Activated CD4-positive, alpha-beta T cell treated with anti-CD3 and anti-CD28 coated beads for 36 hours (primary cell): ENCODE measurements at regions of chr15 and their contacts with region 1.

Region 1: DNA sequence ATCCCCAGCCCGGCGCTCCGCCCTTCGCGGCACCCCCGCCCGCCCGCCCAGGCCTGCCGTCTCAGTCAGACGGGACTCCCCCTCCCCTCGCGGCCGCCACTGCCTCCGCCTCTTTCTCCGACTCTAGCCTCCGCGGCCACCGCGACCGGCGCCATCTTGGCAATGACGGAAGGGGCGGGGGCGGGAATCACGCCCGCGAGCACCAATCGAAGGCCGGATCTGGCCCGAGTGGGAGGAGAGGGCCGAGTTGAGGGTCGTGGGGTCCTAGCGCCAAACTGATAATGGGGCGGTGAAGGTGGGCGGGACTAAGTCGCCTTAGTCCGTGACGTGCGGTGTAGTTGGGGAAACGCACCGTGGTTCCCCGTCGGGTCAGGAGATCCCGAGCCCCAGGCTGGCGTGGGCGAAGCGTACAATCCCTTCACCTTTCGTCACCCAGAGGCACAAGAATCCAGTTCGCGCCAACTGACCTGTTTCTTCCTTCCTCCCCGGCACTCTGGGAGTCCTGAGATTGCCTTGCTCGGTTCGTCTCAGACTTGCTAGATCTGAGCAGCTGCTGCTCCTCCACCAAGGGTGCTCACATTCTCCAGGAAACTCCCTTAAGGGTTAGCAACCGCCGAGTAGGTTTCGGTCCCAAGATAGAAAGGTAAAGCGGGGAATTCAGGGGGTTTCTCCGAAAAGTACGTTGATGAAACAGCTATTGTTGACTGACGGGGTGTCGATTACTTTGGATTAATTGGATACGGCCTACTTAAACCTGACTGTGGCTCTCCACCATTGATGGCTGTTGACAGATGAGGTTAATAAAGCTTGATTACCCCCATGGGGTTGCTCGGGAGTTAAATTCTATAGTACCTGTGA is at the start of gene DENND4A:
- DNase-seq: peak; percentile 99
- ATAC-seq: peak; percentile 80
- H3K4me3 Mint-ChIP-seq: peak within 1 kb of the TSS; percentile 80
- H3K27ac Mint-ChIP-seq: peak within 1 kb of the TSS; percentile 98
- H3K4me1 Mint-ChIP-seq: peaks cover 60% of the 10 kb centered on the region
- H3K27me3 Mint-ChIP-seq: no peaks in the 10 kb centered on the region
- total RNA-seq, gene DENND4A: 35.6 to 43.5 TPM

Region 2: DNA sequence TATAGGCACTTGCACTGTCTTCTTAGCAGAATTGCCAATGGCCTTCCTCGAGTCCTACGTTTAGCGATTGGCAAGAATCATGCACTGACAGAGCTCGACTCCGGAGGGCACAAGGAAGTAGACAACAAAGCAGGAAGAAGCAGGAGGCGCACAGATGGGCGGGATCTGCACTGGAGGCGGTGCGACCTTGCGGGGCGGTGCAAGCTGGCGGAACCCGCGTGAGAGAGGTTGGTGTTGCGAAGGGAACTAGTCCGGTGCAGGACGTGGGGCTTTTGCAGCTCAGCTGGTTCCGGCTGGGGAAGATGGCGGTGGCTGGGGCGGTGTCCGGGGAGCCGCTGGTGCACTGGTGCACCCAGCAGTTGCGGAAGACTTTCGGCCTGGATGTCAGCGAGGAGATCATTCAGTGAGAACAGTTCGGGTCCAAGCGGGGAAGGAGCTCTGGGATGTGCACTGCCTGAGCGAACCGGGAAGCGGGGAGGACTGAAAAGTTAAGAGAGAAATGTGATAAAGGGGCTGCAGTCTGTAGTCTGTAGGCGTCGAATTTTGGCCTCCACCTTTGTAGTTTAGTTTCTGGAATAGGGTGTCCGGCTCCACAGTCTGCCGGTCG is 1404.7 kb before region 1 on chr15 and contains the start of gene TRIP4:
- CTCF ChIA-PET with region 1: no interaction called
- POLR2A ChIA-PET with region 1: no interaction called
- intact Hi-C with region 1: loop called in 1 of 2 experiments (anchors 5 kb)
- DNase-seq: peak; percentile 98
- ATAC-seq: peak; percentile 100
- H3K4me3 Mint-ChIP-seq: peak within 1 kb of the TSS; percentile 85
- H3K27ac Mint-ChIP-seq: peak within 1 kb of the TSS; percentile 91
- H3K4me1 Mint-ChIP-seq: peaks cover 17% of the 10 kb centered on the region
- H3K27me3 Mint-ChIP-seq: no peaks in the 10 kb centered on the region
- total RNA-seq, gene TRIP4: 13.1 to 19.6 TPM

Region 3: DNA sequence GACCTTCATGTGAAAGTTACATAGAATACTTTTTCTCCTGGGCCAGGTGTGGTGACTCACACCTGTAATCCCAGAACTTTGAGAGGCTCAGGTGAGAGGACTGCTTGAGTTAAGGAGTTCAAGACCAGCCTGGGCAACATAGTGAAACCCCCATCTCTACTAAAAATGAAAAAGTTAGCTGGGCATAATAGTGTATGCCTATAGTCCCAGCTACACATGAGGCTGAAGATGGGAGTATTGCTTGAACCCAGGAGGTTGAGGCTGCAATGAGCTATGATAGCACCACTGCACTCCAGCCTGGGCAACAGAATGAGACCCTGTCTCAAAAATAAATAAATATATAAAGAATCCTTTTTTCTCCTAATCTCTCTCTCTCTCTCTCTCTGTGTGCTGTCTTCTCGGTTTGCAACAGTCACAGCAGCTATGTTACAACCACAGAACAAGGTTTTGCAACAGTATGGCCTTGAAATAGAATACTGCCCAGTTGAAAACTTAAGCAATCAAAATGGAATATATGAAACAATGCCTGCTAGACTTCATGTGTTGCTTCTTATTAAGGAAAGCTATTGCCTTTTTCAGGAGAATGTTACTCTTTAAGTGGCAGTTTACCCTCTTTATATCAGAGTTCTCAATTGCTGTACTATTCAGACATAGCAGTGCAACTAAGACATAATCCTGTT is 12.0 kb after region 1 on chr15:
- CTCF ChIA-PET with region 1: interaction called, 29 read pairs
- POLR2A ChIA-PET with region 1: interaction called, 22 read pairs
- intact Hi-C with region 1: loop called (anchors 1 kb)
- DNase-seq: no peak
- ATAC-seq: peak; percentile 15
- H3K4me3 Mint-ChIP-seq: no peak overlapping the region
- H3K27ac Mint-ChIP-seq: peak overlapping the region; percentile 84
- H3K4me1 Mint-ChIP-seq: peaks cover 33% of the 10 kb centered on the region
- H3K27me3 Mint-ChIP-seq: no peaks in the 10 kb centered on the region

Region 4: DNA sequence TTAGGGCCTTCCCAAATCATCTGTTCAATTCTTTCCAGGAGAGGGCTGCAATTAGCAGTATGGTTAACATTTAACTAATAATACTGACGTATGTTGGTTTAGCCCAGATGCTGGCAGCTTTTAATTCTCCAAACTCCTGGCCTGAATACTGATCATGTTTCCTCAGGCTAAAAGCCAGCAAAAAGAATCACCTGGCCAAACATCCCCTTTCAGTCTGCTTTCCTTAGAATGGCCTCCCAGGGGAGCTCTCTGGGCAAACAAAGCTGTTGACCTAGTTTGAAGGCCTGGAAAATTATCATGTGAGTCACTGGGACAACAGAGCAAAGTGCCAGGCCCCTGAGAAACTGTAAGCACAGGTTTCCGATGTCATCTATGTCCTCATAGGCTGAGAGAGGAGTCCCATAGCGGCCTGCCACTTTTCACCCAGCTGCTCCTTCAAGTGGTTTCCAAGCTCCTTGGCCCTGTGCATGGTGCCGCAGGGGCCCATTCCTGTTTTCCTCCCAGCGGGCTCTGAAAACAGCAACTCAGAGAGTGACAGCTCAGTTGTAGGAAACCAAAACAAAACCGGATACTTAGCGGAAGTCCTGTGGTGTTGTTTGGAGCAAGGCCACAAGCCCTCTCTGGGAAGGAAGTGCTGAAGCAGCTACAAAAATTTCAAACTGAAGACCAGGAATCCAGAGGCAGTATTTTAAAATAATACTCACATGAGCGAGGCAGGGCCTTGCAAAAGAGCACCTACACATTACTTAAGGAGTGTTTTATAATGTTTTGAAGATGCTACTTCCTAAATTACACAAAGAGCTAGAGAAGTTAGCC is 40.4 kb after region 1 on chr15:
- CTCF ChIA-PET with region 1: interaction called, 11 read pairs
- POLR2A ChIA-PET with region 1: interaction called, 15 read pairs
- intact Hi-C with region 1: loop called (anchors 1 to 2 kb)
- DNase-seq: peak; percentile 67
- ATAC-seq: peak; percentile 62
- H3K4me3 Mint-ChIP-seq: peak overlapping the region; percentile 66
- H3K27ac Mint-ChIP-seq: peak overlapping the region; percentile 93
- H3K4me1 Mint-ChIP-seq: peaks cover 50% of the 10 kb centered on the region
- H3K27me3 Mint-ChIP-seq: no peaks in the 10 kb centered on the region

Region 5: DNA sequence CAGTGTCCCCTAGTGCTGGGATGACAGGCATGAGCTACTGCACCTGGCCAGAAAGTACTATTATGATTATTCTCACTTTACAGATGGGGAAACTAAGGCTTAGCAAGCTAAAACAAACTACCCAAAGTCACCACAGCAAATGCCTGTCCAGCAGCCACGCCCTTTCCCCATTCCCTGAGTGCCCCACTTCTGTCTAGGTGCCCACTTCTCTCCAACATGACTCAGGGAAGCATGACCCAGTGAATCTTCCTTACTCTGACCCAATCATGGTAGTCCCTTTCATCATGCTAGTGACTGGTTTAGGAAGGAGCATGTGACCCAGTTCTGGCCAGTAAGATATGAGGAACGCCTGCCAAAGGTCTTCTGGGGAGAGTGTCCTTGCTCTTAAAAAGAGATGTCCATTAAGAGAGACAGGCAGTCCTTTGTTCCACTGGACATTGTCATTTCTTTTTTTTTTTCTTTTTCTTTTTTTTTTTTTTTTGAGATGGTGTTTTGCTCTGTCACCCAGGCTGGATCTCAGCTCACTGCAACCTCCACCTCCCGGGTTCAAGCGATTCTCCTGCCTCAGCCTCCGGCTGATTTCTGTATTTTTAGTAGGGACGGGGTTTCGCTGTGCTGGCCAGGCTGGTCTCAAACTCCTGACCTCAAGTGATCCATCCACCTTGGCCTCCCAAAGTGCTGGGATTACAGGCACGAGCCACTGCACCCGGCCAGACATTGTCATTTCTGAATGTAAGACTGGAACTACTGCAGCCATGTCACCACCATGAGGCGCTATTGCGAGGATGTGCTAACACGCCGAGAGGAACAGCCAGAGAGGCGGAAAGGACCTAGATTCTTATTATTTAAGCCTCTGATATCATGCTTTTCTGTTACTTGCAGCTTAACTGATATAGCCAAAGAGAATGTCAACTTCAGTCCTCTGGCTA is 441.4 kb after region 1 on chr15:
- CTCF ChIA-PET with region 1: no interaction called
- POLR2A ChIA-PET with region 1: no interaction called
- intact Hi-C with region 1: no loop called
- DNase-seq: peak; percentile 52
- ATAC-seq: peak; percentile 39
- H3K4me3 Mint-ChIP-seq: no peak overlapping the region
- H3K27ac Mint-ChIP-seq: no peak overlapping the region
- H3K4me1 Mint-ChIP-seq: no peaks in the 10 kb centered on the region
- H3K27me3 Mint-ChIP-seq: peaks cover 4% of the 10 kb centered on the region

Region 6: DNA sequence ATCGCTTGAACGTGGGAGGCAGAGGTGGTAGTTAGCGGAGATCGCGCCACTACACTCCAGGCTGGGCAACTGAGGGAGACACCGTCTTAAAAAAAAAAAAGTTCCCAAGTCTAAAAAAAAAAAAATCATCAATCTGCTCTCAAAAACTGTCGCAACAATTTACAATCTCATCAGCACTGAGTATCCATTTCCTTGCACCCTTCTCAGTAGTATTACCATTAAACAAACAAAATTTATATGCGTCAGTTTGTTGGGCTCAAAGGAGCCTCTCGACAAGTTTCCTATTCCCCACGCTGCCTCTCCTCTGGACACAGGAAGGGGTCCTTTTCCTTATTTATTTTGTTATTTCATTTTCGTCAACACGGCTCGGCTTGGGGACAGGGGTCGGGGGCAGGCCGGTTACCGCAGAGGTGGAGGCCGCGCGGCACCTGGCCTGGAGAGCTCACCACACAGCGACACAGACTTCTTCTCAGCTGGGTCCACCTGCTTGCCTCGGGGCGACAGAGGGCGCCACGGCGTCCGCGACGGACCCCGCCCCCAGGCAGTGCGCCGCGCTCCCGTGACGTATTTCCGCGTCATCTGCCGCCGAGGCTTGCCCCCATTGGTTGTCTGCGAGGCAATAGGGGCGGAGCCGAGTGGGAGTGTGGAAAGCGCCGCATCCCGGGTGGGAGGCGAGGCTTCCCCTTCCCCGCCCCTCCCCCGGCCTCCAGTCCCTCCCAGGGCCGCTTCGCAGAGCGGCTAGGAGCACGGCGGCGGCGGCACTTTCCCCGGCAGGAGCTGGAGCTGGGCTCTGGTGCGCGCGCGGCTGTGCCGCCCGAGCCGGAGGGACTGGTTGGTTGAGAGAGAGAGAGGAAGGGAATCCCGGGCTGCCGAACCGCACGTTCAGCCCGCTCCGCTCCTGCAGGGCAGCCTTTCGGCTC is 594.1 kb after region 1 on chr15 and contains the start of gene MAP2K1:
- CTCF ChIA-PET with region 1: no interaction called
- POLR2A ChIA-PET with region 1: no interaction called
- intact Hi-C with region 1: loop called in 1 of 2 experiments (anchors 2 kb)
- DNase-seq: peak; percentile 99
- ATAC-seq: peak; percentile 84
- H3K4me3 Mint-ChIP-seq: peak within 1 kb of the TSS; percentile 95
- H3K27ac Mint-ChIP-seq: peak within 1 kb of the TSS; percentile 100
- H3K4me1 Mint-ChIP-seq: peaks cover 44% of the 10 kb centered on the region
- H3K27me3 Mint-ChIP-seq: no peaks in the 10 kb centered on the region
- total RNA-seq, gene MAP2K1: 94.9 to 115 TPM